ENCODE measurements at regions of chr15 and their contacts with region 1.

Region 1: GRCh38 chr15:90482124-90483011 is 47.4 kb upstream of the CRTC3 start:
- DNase-seq: peak; percentile 19 to 68 (median 38)
- ATAC-seq: peak; percentile 88
- H3K4me3 ChIP-seq: no peak overlapping the region
- H3K27ac ChIP-seq: no peak overlapping the region
- H3K4me1 ChIP-seq: no peaks in the 10 kb centered on the region
- H3K27me3 ChIP-seq: no peaks in the 10 kb centered on the region
- CTCF ChIP-seq: peak; percentile 82 to 91 (median 85)
- EP300 ChIP-seq: 0 out of 2 replicates have a peak, but pooled peaks have one; percentile 3
- POLR2A ChIP-seq: no peak
- RAD21 ChIP-seq: peak; percentile 90 to 96

Region 2: GRCh38 chr15:90143166-90143655 is 339.2 kb before region 1 on chr15:
- CTCF ChIA-PET with region 1: no interaction called
- POLR2A ChIA-PET with region 1: no interaction called
- in situ Hi-C with region 1: loop called (anchors 10 kb)
- intact Hi-C with region 1: loop called (anchors 1 kb)
- DNase-seq: peak; percentile 96 to 98 (median 97)
- ATAC-seq: peak; percentile 98
- H3K4me3 ChIP-seq: no peak overlapping the region
- H3K27ac ChIP-seq: peak overlapping the region; percentile 83
- H3K4me1 ChIP-seq: peaks cover 28 to 35% of the 10 kb centered on the region in 2 experiments
- H3K27me3 ChIP-seq: no peaks in the 10 kb centered on the region
- CTCF ChIP-seq: peak; percentile 94 to 97 (median 97)
- EP300 ChIP-seq: peak; percentile 89
- POLR2A ChIP-seq: no peak
- RAD21 ChIP-seq: peak; percentile 98

Region 3: DNA sequence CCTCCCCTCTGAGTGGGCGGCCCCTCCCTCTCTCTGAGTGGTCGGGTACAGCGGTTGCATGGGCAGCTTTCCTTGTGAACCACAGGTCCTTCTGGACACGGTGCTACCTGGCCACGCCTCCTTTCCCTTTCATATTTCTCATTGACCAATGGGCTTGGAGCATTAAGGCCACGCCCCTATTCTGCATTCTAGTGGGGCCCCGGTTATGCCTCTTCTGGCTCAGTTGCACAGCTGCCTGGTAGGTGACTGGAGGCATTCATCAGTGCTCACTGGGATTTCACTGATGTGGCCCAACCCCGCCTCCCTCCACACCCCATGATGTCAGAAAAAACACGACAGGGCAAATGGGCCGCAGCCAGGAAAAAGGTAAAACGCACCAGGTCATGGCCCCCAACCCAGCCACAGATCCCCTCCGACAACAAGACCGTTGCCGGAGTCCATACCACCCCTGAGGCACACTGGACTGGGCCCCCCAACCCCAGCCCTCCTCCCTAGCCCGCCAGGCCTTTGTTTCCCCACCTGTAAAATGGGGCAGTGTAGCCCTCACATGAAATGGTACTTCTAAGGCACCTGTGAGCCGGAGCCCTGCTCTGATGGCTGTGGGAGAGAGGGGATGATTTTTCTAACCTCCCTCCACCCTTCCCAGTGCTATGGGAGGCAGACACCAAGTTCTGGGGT is 190.6 kb before region 1 on chr15:
- CTCF ChIA-PET with region 1: interaction called, 46 read pairs
- POLR2A ChIA-PET with region 1: no interaction called
- in situ Hi-C with region 1: no loop called
- intact Hi-C with region 1: loop called (anchors 1 kb)
- DNase-seq: peak; percentile 87 to 90 (median 90)
- ATAC-seq: peak; percentile 76
- H3K4me3 ChIP-seq: no peak overlapping the region
- H3K27ac ChIP-seq: no peak overlapping the region
- H3K4me1 ChIP-seq: peaks cover 0 to 27% of the 10 kb centered on the region in 2 experiments; a peak in 4 of 5 replicates
- H3K27me3 ChIP-seq: no peaks in the 10 kb centered on the region; a peak in 1 of 5 replicates
- CTCF ChIP-seq: no peak
- EP300 ChIP-seq: no peak
- POLR2A ChIP-seq: no peak
- RAD21 ChIP-seq: no peak

Region 4: DNA sequence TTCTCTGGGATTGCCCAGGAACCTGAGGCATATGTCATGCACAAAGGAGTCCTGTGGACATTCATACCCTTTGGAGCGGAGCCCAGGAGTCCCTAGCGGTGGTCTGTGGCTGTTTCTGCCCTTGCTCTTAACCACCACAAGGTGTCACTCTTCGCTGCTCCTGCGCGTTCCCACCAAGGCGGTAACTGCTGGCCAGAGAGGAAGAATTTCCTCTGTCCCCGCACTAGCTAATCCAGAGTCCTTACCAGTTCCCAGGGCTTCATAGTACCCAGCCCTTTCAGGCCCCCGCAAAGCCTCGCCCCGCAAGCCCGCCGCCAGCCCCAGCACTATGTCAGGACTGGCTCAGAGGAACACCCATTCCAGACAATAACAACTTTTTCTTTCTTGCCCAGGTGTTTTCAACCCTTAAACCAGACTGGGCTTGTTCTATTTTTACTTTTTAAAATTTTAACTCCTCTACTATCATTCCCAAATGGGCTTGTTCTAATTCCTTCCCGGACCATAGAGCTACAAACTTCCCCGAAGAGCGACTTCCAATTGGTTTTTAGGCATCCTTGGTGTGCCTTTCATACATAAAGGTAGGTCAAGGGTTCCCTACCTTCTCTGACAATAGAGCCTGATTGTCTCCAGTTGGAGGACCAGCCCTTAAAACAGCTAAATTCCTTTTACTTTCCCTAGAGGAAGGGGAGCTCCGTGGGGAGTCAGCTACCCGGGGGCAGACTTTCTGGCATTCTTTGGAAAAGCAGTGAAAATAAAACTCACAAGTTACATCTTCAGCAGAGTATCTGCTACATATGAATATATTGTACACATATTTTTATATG is 162.1 kb before region 1 on chr15:
- CTCF ChIA-PET with region 1: interaction called, 64 read pairs
- POLR2A ChIA-PET with region 1: interaction called, 5 read pairs
- in situ Hi-C with region 1: no loop called
- intact Hi-C with region 1: loop called (anchors 1 kb)
- DNase-seq: peak; percentile 85 to 92 (median 86)
- ATAC-seq: peak; percentile 100
- H3K4me3 ChIP-seq: no peak overlapping the region
- H3K27ac ChIP-seq: peak overlapping the region; percentile 21; the same call in 2 of the 3 replicates
- H3K4me1 ChIP-seq: peaks cover 3 to 4% of the 10 kb centered on the region in 2 experiments; a peak in 2 of 5 replicates
- H3K27me3 ChIP-seq: no peaks in the 10 kb centered on the region
- CTCF ChIP-seq: peak; percentile 99
- EP300 ChIP-seq: no peak
- POLR2A ChIP-seq: no peak
- RAD21 ChIP-seq: peak; percentile 97 to 98

Region 5: DNA sequence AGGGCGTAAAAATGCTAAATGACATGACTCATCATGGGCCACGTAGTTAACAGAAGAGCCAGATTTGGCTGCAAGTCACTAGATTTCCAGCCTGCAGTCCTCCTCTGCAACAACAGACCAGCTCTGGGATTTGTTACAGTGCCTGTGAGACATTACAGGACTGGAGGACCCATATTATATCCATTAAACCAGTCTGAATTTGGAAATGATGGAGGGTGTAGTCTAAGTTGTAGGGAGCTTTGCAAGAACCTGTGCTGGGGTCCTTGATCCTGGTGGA is 119.5 kb before region 1 on chr15:
- CTCF ChIA-PET with region 1: interaction called, 12 read pairs
- POLR2A ChIA-PET with region 1: interaction called, 3 read pairs
- in situ Hi-C with region 1: no loop called
- intact Hi-C with region 1: loop called (anchors 1 kb)
- DNase-seq: peak in 2 of 4 experiments; percentile 25 to 50
- ATAC-seq: peak; percentile 63
- H3K4me3 ChIP-seq: no peak overlapping the region
- H3K27ac ChIP-seq: peak overlapping the region; percentile 67; the same call in 1 of the 3 replicates
- H3K4me1 ChIP-seq: peaks cover 0 to 17% of the 10 kb centered on the region in 2 experiments; a peak in 4 of 5 replicates
- H3K27me3 ChIP-seq: no peaks in the 10 kb centered on the region
- CTCF ChIP-seq: no peak
- EP300 ChIP-seq: no peak
- POLR2A ChIP-seq: no peak
- RAD21 ChIP-seq: no peak

Region 6: DNA sequence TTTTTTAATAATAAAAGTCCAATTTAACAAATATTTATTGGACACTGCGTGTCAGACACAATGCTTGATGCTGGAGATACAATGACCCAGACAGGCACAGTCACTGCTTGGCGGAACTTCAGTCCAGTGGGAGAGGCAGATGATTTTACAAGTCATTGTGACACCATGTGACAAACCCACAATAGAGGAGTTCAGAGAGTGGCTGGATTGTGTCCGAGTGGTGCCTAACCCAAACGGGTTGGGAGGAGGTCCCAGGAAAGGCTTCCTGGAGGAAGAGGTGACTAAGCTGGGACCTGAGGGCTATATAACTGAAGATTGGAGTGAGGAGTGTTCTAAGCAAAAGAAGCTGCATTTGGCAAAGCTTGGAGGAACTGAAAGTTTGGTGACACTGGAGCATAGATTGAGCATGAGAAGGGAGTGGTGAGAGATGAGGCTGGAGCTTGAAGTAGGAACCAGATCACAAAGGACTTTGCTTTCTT is 88.7 kb after region 1 on chr15:
- CTCF ChIA-PET with region 1: no interaction called
- POLR2A ChIA-PET with region 1: no interaction called
- in situ Hi-C with region 1: no loop called
- intact Hi-C with region 1: no loop called
- DNase-seq: peak; percentile 44 to 84 (median 60)
- ATAC-seq: peak; percentile 99
- H3K4me3 ChIP-seq: no peak overlapping the region
- H3K27ac ChIP-seq: peak overlapping the region; percentile 70
- H3K4me1 ChIP-seq: peaks cover 2 to 14% of the 10 kb centered on the region in 2 experiments; a peak in 4 of 5 replicates
- H3K27me3 ChIP-seq: no peaks in the 10 kb centered on the region
- CTCF ChIP-seq: no peak
- EP300 ChIP-seq: 0 out of 2 replicates have a peak, but pooled peaks have one; percentile 16
- POLR2A ChIP-seq: no peak
- RAD21 ChIP-seq: peak; percentile 7 to 17; a peak in 1 of 4 replicates

Region 7: DNA sequence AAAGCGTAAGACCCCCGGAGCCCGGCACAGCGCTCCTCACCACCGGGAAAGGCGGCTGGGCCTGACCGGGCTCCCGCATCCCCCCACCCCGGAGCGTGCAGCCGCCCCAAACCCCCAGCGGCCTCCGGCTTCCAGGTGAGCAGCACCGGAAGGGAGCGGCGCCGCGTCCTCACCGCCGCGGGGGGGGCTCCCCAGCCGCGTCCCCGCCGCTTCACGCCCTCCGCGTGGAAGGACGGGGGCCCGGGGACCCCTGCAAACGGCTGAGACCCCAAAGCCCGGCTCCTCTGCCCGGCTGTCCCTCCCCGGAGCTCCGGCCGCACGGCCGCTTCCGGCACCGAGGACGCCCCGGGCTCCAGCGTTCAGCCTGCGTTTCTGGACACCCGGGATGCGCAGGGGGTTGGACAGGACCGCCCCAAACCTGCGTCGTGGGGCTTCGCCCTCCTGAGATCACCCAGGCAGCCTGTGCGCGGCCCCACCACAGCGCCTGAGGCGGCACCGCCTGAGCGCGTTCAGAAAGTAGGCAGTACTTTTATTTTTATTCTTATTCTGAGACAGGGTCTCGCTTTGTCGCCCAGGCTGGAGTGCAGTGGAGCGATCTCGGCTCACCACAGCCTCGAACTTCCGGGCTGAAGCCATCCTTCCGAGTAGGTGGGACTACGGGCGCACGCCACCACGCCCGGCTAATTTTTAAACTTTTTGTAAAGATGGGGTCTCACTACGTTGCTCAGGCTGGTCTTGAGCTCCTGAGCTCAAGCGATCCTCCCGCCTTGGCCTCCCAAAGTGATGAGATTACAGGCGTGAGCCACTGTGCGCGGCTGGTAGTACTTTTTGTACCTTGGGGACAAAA is 183.1 kb after region 1 on chr15:
- CTCF ChIA-PET with region 1: no interaction called
- POLR2A ChIA-PET with region 1: no interaction called
- in situ Hi-C with region 1: no loop called
- intact Hi-C with region 1: no loop called
- DNase-seq: peak; percentile 75 to 82 (median 78)
- ATAC-seq: peak; percentile 85
- H3K4me3 ChIP-seq: peak overlapping the region; percentile 50
- H3K27ac ChIP-seq: peak overlapping the region; percentile 89
- H3K4me1 ChIP-seq: peaks cover 15 to 27% of the 10 kb centered on the region in 2 experiments; a peak in 4 of 5 replicates
- H3K27me3 ChIP-seq: no peaks in the 10 kb centered on the region
- CTCF ChIP-seq: no peak
- EP300 ChIP-seq: no peak
- POLR2A ChIP-seq: peak; percentile 79
- RAD21 ChIP-seq: no peak

Region 8: DNA sequence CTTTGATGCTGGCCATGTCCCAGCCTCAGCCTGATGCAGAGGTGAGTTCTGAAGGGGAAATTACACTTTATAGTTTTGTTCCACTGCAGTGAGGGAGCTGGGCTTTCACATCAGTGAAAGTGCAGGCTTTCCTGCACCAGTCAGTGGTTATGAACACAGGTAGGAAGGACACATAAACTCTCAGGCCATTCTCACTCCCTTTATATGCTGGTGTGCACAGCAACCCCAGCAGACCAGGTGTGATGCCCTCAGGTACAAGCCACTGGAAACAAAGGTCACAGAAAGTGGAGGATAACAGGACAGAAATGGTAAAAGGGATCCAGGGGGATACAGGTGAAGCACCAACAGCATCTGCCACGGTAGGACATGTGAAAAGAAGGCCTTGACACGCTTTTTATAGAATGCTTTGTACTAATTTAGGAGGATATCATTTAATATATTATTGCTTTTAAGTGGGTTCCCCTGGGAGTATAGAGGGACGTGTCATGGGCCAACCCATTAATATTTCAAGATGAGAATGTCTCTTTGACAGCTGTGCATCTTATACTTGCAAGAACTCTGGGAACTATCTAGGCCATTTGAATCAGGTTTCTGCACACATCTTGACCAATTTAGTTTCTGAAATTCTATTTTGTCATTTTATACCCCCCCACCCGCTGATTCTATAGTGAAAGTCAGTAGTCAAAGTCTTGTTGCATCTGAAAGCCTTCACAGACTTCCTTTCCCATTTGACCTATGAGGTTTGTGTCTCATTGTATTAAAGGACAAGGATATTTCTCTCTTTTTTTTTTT is 209.8 kb after region 1 on chr15:
- CTCF ChIA-PET with region 1: interaction called, 3 read pairs
- POLR2A ChIA-PET with region 1: no interaction called
- in situ Hi-C with region 1: no loop called
- intact Hi-C with region 1: loop called (anchors 10 kb)
- DNase-seq: no peak
- ATAC-seq: no peak
- H3K4me3 ChIP-seq: no peak overlapping the region
- H3K27ac ChIP-seq: no peak overlapping the region
- H3K4me1 ChIP-seq: no peaks in the 10 kb centered on the region; a peak in 1 of 5 replicates
- H3K27me3 ChIP-seq: no peaks in the 10 kb centered on the region
- CTCF ChIP-seq: no peak
- EP300 ChIP-seq: no peak
- POLR2A ChIP-seq: no peak
- RAD21 ChIP-seq: no peak

Region 9: DNA sequence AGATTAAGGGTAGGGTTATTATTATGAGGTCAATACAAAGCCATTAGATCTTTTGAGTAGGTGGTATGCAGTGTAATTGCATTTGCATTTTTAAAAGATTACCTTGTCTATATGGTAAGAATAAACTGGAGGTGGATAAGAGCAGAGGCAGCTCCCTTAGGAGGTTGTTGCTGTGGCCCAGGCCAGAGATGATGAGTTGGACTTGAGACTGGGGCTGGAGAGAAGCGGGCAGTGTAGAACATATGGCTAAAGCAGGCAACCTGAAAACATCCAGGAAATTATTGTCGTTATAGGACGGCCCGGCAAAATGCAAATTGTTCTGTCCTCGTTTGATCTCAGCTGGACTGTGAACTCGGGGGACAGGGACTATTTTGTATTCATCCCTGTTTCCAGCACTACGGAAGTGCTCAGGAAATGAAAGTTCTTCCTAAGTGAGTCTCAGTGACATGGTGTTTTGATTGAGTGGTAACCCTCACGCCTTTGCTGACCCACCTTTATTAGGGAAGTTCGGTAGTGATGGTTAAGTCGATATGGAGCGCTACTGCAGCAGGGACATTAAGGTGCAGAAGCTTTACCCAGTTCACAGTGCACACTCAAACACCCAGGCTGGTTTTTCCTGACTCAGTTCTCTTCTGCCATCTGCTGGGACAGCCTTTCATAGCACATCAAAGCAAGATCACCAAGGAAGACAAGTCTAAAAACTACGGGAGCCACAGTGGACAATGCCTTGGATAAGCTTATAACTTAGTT is 567.2 kb after region 1 on chr15:
- CTCF ChIA-PET with region 1: no interaction called
- POLR2A ChIA-PET with region 1: no interaction called
- in situ Hi-C with region 1: loop called (anchors 10 kb)
- intact Hi-C with region 1: no loop called
- DNase-seq: peak; percentile 25 to 79 (median 45)
- ATAC-seq: peak; percentile 97
- H3K4me3 ChIP-seq: no peak overlapping the region
- H3K27ac ChIP-seq: no peak overlapping the region
- H3K4me1 ChIP-seq: peaks cover 0 to 10% of the 10 kb centered on the region in 2 experiments; a peak in 3 of 5 replicates
- H3K27me3 ChIP-seq: peaks cover 5 to 12% of the 10 kb centered on the region in 2 experiments; a peak in 4 of 5 replicates
- CTCF ChIP-seq: peak; percentile 75 to 84 (median 81)
- EP300 ChIP-seq: no peak
- POLR2A ChIP-seq: no peak
- RAD21 ChIP-seq: peak; percentile 85 to 88

Measured in K562 (cell line).